IMR-90 (cell line): ENCODE measurements at regions of chrX and their contacts with region 1.

Region 1: DNA sequence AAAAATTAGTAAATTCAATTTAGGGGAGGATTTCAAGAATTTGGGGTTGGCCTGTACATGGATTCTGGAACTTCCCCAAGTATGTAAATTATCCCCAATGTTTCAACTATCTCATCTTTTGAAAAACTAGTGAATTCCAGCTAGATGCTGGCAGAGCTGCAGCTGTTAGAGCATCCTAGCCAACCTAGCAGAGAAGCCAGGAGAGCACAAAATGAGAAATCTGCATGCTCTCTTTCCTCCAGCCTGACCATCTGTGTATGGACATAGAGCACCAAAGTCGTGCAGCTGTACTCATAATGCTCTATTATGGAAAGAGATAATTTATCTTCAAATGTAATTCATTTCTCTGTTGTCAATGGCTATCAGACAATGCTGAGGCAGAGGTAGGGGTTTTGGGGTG is 1217.7 kb downstream of the PCDH19 start:
- DNase-seq: no peak
- ATAC-seq: no peak
- H3K4me3 ChIP-seq: no peak overlapping the region
- H3K27ac ChIP-seq: no peak overlapping the region
- H3K4me1 ChIP-seq: no peaks in the 10 kb centered on the region
- H3K27me3 ChIP-seq: no peaks in the 10 kb centered on the region
- CTCF ChIP-seq: no peak
- POLR2A ChIP-seq: no peak
- RAD21 ChIP-seq: no peak

Region 2: DNA sequence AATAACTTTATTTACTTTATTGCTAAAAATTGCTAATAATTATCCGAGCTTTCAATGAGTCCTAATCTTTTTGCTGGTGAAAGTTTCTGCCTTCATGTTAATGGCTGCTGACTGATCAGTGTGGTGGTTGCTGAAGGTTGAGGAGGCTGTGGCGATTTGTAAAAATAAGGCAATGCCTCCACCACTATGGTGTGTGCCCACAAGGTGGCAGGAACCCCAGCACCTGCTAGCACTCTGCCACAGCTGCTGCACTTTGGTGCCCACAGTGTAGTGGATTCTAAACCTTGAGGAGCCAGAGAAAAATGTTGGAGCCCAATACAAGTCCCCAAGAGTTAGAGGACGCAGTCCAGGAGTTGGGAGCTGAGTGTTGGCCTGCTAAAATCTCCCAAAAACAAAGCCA is 19.5 kb before region 1 on chrX:
- CTCF ChIA-PET with region 1: no interaction called
- POLR2A ChIA-PET with region 1: no interaction called
- dilution Hi-C with region 1: no loop called
- in situ Hi-C with region 1: no loop called
- intact Hi-C with region 1: loop called (anchors 2 kb)
- DNase-seq: no peak
- ATAC-seq: no peak
- H3K4me3 ChIP-seq: no peak overlapping the region
- H3K27ac ChIP-seq: no peak overlapping the region
- H3K4me1 ChIP-seq: no peaks in the 10 kb centered on the region
- H3K27me3 ChIP-seq: no peaks in the 10 kb centered on the region
- CTCF ChIP-seq: no peak
- POLR2A ChIP-seq: no peak
- RAD21 ChIP-seq: no peak

Region 3: DNA sequence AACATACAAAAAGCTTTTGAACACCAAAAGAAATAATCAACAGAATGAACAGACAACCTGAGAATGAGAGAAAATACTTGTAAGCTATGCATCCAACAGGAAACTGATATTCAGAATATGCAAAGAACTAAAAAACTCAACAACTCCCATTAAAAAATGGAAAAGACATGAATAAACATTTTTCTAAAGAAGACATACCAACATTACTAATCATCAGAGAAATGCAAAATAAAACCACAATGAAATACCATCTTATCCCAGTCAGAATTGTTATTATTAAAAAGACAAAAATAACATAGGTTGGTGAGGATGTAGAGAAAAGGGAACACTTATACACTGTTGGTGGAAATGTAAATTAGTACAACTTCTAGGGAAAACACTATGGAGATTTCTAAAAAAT is 55.8 kb after region 1 on chrX:
- CTCF ChIA-PET with region 1: no interaction called
- POLR2A ChIA-PET with region 1: no interaction called
- dilution Hi-C with region 1: no loop called
- in situ Hi-C with region 1: no loop called
- intact Hi-C with region 1: no loop called
- DNase-seq: no peak
- ATAC-seq: no peak
- H3K4me3 ChIP-seq: no peak overlapping the region
- H3K27ac ChIP-seq: no peak overlapping the region
- H3K4me1 ChIP-seq: no peaks in the 10 kb centered on the region
- H3K27me3 ChIP-seq: no peaks in the 10 kb centered on the region
- CTCF ChIP-seq: no peak
- POLR2A ChIP-seq: no peak
- RAD21 ChIP-seq: no peak

Region 4: DNA sequence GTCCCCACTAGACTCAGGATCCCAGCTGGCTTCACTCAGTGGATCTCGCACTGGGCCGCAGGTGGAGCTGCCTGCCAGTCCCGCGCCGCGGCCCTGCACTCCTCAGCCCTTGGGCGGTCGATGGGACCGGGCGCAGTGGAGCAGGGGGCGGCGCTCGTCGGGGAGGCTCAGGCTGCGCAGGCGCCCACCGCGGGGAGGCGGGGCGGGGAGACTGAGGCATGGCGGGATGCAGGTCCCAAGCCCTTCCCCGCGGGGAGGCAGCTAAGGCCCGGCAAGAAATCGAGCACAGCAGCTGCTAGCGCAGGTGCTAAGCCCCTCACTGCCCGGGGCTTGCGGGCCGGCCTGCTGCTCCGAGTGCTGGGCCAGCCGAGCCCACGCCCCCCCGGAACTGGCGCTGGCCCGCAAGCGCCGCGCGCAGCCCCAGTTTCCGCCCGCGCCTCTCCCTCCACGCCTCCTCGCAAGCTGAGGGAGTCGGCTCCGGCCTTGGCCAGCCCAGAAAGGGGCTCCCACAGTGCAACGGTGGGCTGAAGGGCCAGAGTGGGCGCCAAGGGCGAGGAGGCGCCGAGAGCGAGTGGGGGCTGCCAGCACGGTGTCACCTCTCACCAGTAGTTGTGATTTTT is 179.7 kb after region 1 on chrX:
- CTCF ChIA-PET with region 1: no interaction called
- POLR2A ChIA-PET with region 1: no interaction called
- dilution Hi-C with region 1: no loop called
- in situ Hi-C with region 1: no loop called
- intact Hi-C with region 1: no loop called
- DNase-seq: no peak
- ATAC-seq: no peak
- H3K4me3 ChIP-seq: no peak overlapping the region
- H3K27ac ChIP-seq: no peak overlapping the region
- H3K4me1 ChIP-seq: no peaks in the 10 kb centered on the region
- H3K27me3 ChIP-seq: no peaks in the 10 kb centered on the region
- CTCF ChIP-seq: no peak
- POLR2A ChIP-seq: no peak
- RAD21 ChIP-seq: no peak

Region 5: DNA sequence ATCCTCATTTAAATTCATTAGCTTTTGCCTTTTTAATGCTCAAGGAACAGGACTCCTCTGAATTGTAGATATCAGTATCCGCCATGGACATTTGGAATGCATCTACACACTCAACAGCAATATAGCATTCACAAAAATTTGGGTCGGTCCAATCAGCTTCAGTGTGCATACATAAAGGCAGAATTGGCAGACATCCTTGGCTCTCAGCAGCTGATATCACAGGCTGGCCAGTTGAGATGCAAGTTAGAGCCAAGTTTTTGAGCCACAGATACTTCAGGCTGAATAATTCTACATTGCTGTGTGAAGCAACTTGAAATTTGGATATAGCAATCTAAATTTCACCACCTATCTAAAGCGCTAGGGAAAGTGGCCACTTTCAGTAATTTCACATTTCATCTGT is 396.5 kb after region 1 on chrX:
- CTCF ChIA-PET with region 1: no interaction called
- POLR2A ChIA-PET with region 1: no interaction called
- dilution Hi-C with region 1: no loop called
- in situ Hi-C with region 1: no loop called
- intact Hi-C with region 1: no loop called
- DNase-seq: no peak
- ATAC-seq: no peak
- H3K4me3 ChIP-seq: no peak overlapping the region
- H3K27ac ChIP-seq: no peak overlapping the region
- H3K4me1 ChIP-seq: no peaks in the 10 kb centered on the region
- H3K27me3 ChIP-seq: no peaks in the 10 kb centered on the region
- CTCF ChIP-seq: no peak
- POLR2A ChIP-seq: no peak
- RAD21 ChIP-seq: no peak

Region 6: DNA sequence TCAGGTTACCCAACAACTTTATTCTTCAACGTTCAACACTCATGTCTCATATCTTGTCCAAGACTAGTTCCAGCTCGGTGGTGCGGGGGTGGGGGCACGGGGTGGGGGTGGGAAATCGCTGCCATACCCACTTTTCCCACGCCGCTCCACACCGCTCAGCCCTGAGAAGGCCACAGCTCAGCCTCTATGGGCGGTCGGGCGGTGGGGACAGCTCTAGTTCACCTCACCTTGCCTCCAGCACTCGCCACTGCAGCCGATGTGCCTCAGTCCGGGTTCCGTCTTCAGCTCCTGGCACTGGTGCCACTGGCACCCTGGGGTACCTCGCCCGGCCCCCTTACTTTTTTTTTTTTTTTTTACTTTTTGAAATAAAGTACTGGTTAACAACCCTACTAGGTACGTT is 695.5 kb after region 1 on chrX:
- CTCF ChIA-PET with region 1: no interaction called
- POLR2A ChIA-PET with region 1: no interaction called
- dilution Hi-C with region 1: no loop called
- in situ Hi-C with region 1: no loop called
- intact Hi-C with region 1: no loop called
- DNase-seq: no peak
- ATAC-seq: no peak
- H3K4me3 ChIP-seq: no peak overlapping the region
- H3K27ac ChIP-seq: no peak overlapping the region
- H3K4me1 ChIP-seq: no peaks in the 10 kb centered on the region
- H3K27me3 ChIP-seq: no peaks in the 10 kb centered on the region
- CTCF ChIP-seq: no peak
- POLR2A ChIP-seq: no peak
- RAD21 ChIP-seq: no peak